T-cell (primary cell): ENCODE measurements at regions of chr6 and their contacts with region 1.

Region 1: GRCh38 chr6:166989427-166990032 is 9.7 kb upstream of the CEP43 start:
- DNase-seq: peak in 27 of 35 experiments; percentile 14 to 76 (median 43)
- ATAC-seq: peak; percentile 66 to 82 (median 76)
- H3K4me3 ChIP-seq: no peak overlapping the region
- H3K4me3 Mint-ChIP-seq: no peak overlapping the region
- H3K27ac ChIP-seq: no peak overlapping the region
- H3K27ac Mint-ChIP-seq: peak overlapping the region; percentile 61 to 65
- H3K4me1 ChIP-seq: peaks cover 8 to 9% of the 10 kb centered on the region in 2 experiments
- H3K4me1 Mint-ChIP-seq: peaks cover 15 to 31% (median 30%) of the 10 kb centered on the region in 3 donors
- H3K27me3 ChIP-seq: no peaks in the 10 kb centered on the region
- H3K27me3 Mint-ChIP-seq: no peaks in the 10 kb centered on the region

Region 2: DNA sequence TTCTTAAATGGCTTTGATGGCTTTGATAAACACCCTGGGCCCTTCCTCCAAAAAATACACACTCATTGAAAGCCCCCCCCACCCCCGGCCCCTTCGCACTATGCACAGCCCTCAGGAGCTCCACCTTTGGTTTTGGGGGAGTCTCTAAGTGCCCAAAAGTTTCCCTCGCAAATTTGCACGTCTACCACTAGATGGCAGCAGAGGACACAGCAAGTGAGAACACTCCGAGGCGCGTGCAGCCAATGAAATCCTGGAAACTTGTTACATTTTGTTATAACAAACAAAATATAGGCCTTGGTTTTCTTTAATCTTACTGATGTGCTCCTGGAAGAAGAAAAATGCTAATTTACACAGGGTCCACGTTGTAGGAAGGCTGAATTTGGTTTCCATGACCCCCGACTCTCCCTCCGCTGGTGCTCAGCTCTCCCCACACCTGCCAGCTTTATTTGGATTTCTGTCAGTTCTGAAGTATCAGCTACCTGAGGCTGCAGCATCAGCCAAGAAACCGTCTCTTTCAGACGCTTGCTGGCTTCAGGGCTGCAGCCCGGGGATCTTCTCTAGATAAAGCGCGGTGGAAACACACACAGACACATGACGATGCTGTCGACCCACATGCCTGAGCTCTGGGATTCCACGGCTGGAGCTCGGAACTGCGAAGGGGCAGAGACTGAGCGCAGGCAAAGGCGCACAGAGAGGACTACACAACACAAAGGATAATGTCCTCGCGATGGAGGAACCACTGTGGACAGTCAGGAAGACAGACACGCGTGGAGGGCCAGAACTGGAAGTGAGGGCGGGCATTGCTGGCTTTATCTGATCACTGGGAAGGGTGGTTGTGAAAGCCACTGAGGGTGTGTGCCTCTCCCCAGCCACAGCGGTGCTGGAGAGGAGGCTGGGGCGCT is 214.1 kb before region 1 on chr6:
- CTCF ChIA-PET with region 1: interaction called, 19 to 31 read pairs
- POLR2A ChIA-PET with region 1: no interaction called
- DNase-seq: peak in 34 of 35 experiments; percentile 25 to 90 (median 53)
- ATAC-seq: peak; percentile 67 to 78 (median 77)
- H3K4me3 ChIP-seq: no peak overlapping the region
- H3K4me3 Mint-ChIP-seq: no peak overlapping the region
- H3K27ac ChIP-seq: no peak overlapping the region
- H3K27ac Mint-ChIP-seq: no peak overlapping the region
- H3K4me1 ChIP-seq: peaks cover 2 to 6% of the 10 kb centered on the region in 2 experiments
- H3K4me1 Mint-ChIP-seq: peaks cover 4 to 7% (median 6%) of the 10 kb centered on the region in 3 donors
- H3K27me3 ChIP-seq: peaks cover 0 to 9% of the 10 kb centered on the region in 2 experiments
- H3K27me3 Mint-ChIP-seq: peaks cover 4 to 7% of the 10 kb centered on the region in 2 donors

Region 3: DNA sequence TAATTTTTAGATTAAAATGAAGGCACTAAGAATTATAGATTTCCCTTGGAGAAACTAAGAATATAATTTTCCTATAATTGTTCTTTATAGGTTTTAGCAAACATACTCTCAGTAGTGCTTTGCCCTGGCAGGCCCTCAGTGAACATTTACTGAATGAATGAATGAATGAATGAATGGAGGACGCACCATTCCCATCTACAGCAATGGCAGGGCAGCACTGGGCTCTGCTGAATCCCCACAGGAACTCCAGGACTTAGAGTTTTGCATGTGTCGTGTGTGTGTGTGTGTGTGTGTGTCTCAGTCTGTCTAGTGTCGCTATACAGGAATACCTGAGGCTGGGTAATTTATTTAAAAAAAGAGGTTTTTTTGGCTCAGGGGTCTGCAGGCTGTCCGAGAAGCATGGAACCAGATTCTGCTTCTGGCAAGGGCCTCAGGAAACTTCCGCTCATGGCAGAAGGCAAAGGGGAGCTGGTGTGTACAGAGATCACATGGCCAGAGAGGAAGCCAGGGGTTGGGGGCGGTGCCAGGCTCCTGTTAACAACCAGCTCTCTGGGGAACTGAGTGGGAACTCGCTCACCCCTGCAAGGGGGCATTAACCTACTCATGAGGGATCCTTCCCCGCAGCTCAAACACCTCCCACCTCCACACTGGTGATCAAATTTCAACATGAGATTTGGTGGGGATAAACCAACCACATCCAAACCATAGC is 53.3 kb before region 1 on chr6:
- CTCF ChIA-PET with region 1: interaction called, 4 to 17 read pairs
- POLR2A ChIA-PET with region 1: interaction called in 1 of 2 experiments, 3 read pairs
- DNase-seq: peak in 5 of 35 experiments; percentile 26 to 52 (median 30)
- ATAC-seq: peak; percentile 38 to 81 (median 72)
- H3K4me3 ChIP-seq: no peak overlapping the region
- H3K4me3 Mint-ChIP-seq: no peak overlapping the region
- H3K27ac ChIP-seq: no peak overlapping the region
- H3K27ac Mint-ChIP-seq: peak overlapping the region; percentile 78 to 82
- H3K4me1 ChIP-seq: peaks cover 5 to 33% of the 10 kb centered on the region in 2 experiments
- H3K4me1 Mint-ChIP-seq: peaks cover 14 to 64% (median 62%) of the 10 kb centered on the region in 3 donors
- H3K27me3 ChIP-seq: no peaks in the 10 kb centered on the region
- H3K27me3 Mint-ChIP-seq: no peaks in the 10 kb centered on the region

Region 4: DNA sequence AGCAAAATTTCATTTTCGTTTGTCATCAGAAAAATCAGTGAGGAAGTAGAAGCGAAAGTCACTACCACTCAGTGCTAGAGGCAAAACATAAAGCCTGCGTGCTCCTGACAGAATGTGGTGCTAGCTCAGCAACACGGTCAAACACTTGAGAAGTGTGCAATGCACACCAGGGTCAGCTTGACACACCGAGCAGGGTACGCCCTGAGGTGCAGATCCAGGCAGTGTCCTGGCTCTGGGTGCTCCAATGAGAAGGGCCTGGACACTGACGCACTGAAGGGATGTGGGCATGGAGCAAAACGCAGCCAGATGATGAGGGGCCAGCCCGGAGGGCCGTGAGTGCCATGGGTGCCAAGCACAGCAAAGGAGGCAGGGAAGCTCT is 39.1 kb before region 1 on chr6:
- CTCF ChIA-PET with region 1: interaction called, 8 to 14 read pairs
- POLR2A ChIA-PET with region 1: interaction called, 3 to 4 read pairs
- DNase-seq: peak in 1 of 35 experiments; percentile 49
- ATAC-seq: peak in 3 of 4 experiments; percentile 15 to 28 (median 17)
- H3K4me3 ChIP-seq: peak overlapping the region in 1 of 2 donors; percentile 39
- H3K4me3 Mint-ChIP-seq: peak overlapping the region; percentile 70 to 85 (median 77)
- H3K27ac ChIP-seq: peak overlapping the region; percentile 96
- H3K27ac Mint-ChIP-seq: peak overlapping the region; percentile 98 to 100
- H3K4me1 ChIP-seq: peaks cover 34 to 70% of the 10 kb centered on the region in 2 experiments
- H3K4me1 Mint-ChIP-seq: peaks cover 58 to 76% (median 61%) of the 10 kb centered on the region in 3 donors
- H3K27me3 ChIP-seq: no peaks in the 10 kb centered on the region
- H3K27me3 Mint-ChIP-seq: no peaks in the 10 kb centered on the region

Region 5: GRCh38 chr6:167087857-167088354 is 98.4 kb after region 1 on chr6:
- CTCF ChIA-PET with region 1: no interaction called
- POLR2A ChIA-PET with region 1: no interaction called
- DNase-seq: no peak
- ATAC-seq: no peak
- H3K4me3 ChIP-seq: no peak overlapping the region
- H3K4me3 Mint-ChIP-seq: no peak overlapping the region
- H3K27ac ChIP-seq: no peak overlapping the region
- H3K27ac Mint-ChIP-seq: no peak overlapping the region
- H3K4me1 ChIP-seq: peaks cover 21 to 29% of the 10 kb centered on the region in 2 experiments
- H3K4me1 Mint-ChIP-seq: peaks cover 27 to 41% (median 27%) of the 10 kb centered on the region in 3 donors
- H3K27me3 ChIP-seq: no peaks in the 10 kb centered on the region
- H3K27me3 Mint-ChIP-seq: no peaks in the 10 kb centered on the region

Region 6: DNA sequence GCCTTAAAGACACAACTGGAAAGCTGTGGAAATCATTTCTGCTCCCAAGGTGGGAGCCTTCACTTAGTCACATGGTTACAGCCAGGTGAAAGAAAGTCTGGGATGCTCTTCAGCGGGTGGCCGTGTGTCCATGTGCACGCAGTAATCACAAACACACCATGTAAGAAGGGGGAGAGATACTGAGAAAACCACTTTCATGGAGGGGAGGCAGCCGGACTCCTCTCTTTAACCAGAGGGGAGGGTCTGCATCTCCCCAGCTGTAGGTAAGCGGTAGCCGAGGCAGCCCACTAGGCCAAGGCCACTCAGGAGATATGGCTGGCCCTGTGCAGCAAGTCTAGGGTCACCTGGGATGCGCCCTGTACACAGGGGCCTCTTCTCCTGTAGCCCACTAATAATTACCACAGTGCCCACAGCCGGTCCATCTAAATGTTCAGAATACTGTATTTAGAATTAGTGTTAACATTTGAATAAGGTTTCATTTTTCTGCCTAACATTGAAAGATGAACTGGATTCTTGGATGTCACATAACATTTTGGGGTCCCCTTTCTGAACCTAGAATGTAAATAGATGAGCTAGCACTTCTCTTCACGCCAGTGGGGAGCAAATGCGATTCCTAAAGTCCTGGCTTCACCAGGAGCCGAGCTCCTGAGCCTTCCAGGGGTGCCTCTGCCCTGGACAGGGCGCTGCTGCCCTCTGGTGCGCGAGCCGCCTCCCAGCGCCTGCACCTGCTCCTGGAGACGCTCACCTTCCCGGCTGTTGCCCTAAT is 152.3 kb after region 1 on chr6:
- CTCF ChIA-PET with region 1: interaction called in 1 of 2 experiments, 16 read pairs
- POLR2A ChIA-PET with region 1: no interaction called
- DNase-seq: peak in 25 of 35 experiments; percentile 22 to 72 (median 40)
- ATAC-seq: peak; percentile 66 to 77 (median 75)
- H3K4me3 ChIP-seq: no peak overlapping the region
- H3K4me3 Mint-ChIP-seq: no peak overlapping the region
- H3K27ac ChIP-seq: no peak overlapping the region
- H3K27ac Mint-ChIP-seq: peak overlapping the region; percentile 56 to 74
- H3K4me1 ChIP-seq: peaks cover 0 to 18% of the 10 kb centered on the region in 2 experiments
- H3K4me1 Mint-ChIP-seq: peaks cover 0 to 42% (median 29%) of the 10 kb centered on the region in 3 donors
- H3K27me3 ChIP-seq: no peaks in the 10 kb centered on the region
- H3K27me3 Mint-ChIP-seq: peaks cover 4 to 5% of the 10 kb centered on the region in 2 donors